HEK293 (cell line): ENCODE measurements at regions of chr1 and their contacts with region 1.

Region 1: GRCh38 chr1:24321697-24322469 is 2.7 kb downstream of the GRHL3 start:
- H3K4me3 ChIP-seq: peak overlapping the region; percentile 40
- H3K27ac ChIP-seq: peak overlapping the region; percentile 93
- H3K4me1 ChIP-seq: peaks cover 21% of the 10 kb centered on the region
- CTCF ChIP-seq: peak; percentile 66

Region 2: DNA sequence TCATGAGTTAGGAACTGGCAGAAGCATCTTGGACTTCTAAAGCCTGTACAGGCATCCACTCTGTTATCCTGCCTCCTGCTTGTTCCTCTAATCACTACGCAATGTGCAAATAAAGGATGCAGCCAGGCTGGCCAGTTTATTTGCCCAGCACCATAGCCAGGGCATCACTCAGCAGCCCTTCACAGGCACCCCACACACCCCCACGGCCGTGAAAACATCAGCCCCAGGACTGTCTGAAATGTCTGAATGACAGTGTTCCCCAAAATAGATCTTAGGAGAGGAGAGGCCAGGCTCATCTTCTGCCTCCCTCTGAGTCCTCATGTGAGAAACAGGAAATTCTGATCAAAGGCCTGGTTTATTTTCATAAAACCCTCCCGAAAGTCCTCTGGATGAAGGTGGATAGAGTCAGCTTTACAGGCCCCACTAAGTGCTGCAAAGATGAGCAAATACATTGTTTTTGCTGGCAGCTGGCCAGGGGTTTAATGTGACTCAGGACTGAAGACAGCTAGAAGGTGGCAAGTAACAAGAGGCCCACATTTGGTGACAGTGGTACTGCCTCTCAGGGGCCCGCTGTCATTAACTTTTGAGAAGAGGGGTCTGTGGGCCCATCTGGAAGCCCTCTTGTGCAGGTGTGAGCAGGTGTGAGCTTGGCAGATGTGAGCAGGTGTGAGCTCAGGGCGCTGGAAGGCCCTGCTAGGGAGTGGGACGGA is 30.2 kb after region 1 on chr1:
- CTCF ChIA-PET with region 1: no interaction called
- POLR2A ChIA-PET with region 1: interaction called, 13 read pairs
- H3K4me3 ChIP-seq: no peak overlapping the region
- H3K27ac ChIP-seq: no peak overlapping the region
- H3K4me1 ChIP-seq: peaks cover 10% of the 10 kb centered on the region
- CTCF ChIP-seq: no peak

Region 3: GRCh38 chr1:24364975-24365678 is 43.2 kb after region 1 on chr1:
- CTCF ChIA-PET with region 1: no interaction called
- POLR2A ChIA-PET with region 1: interaction called, 10 read pairs
- H3K4me3 ChIP-seq: no peak overlapping the region
- H3K27ac ChIP-seq: no peak overlapping the region
- H3K4me1 ChIP-seq: no peaks in the 10 kb centered on the region
- CTCF ChIP-seq: no peak